ENCODE measurements at regions of chr6 and their contacts with region 1.

Region 1: GRCh38 chr6:41191569-41191968 is 9.4 kb downstream of the TREML2 start:
- DNase-seq: peak in 4 of 9 experiments; percentile 28 to 58 (median 42)
- ATAC-seq: peak; percentile 48
- H3K4me3 ChIP-seq: no peak overlapping the region
- H3K4me3 Mint-ChIP-seq: no peak overlapping the region
- H3K27ac ChIP-seq: no peak overlapping the region
- H3K27ac Mint-ChIP-seq: no peak overlapping the region
- H3K4me1 ChIP-seq: peaks cover 27% of the 10 kb centered on the region
- H3K4me1 Mint-ChIP-seq: peaks cover 45% of the 10 kb centered on the region
- H3K27me3 ChIP-seq: no peaks in the 10 kb centered on the region
- H3K27me3 Mint-ChIP-seq: no peaks in the 10 kb centered on the region
- CTCF ChIP-seq: no peak

Region 2: DNA sequence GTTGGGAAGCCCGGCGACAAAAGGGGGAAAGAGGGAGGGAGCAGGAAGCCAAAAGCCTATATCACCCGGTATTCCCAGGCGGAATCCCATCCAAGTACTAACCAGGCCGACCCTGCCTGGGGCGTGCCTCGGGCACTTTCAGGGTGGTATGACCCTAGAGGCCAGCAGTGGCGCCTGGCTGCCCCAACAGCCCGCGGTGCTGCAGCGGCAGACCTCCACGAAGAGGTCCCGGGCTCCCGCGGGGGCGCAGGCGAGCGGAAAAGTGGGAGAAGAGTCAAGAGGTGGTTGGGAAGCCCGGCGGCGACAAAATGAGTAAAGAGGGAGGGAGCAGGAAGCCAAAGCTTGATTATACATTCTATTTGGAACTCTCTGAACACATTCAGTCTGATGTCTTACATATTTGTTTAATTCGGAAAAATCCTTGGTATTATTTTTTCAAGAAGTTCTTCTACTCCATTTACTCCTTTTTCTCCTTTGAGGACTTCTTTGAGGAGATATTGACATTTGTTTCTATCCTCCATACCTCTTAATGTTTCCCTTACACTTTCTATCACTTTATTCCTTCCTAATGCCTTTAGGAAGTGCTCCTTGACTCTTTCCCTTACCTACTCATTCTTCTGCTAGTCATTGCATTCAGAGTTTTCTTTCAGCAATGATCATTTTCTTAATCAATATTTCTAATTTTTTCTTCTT is 48.0 kb after region 1 on chr6:
- CTCF ChIA-PET with region 1: no interaction called
- POLR2A ChIA-PET with region 1: no interaction called
- intact Hi-C with region 1: loop called in 1 of 2 experiments (anchors 10 kb)
- DNase-seq: no peak
- ATAC-seq: no peak
- H3K4me3 ChIP-seq: no peak overlapping the region
- H3K4me3 Mint-ChIP-seq: no peak overlapping the region
- H3K27ac ChIP-seq: no peak overlapping the region
- H3K27ac Mint-ChIP-seq: no peak overlapping the region
- H3K4me1 ChIP-seq: no peaks in the 10 kb centered on the region
- H3K4me1 Mint-ChIP-seq: no peaks in the 10 kb centered on the region
- H3K27me3 ChIP-seq: peaks cover 0 to 3% of the 10 kb centered on the region in 2 experiments
- H3K27me3 Mint-ChIP-seq: peaks cover 23% of the 10 kb centered on the region
- CTCF ChIP-seq: no peak

Region 3: DNA sequence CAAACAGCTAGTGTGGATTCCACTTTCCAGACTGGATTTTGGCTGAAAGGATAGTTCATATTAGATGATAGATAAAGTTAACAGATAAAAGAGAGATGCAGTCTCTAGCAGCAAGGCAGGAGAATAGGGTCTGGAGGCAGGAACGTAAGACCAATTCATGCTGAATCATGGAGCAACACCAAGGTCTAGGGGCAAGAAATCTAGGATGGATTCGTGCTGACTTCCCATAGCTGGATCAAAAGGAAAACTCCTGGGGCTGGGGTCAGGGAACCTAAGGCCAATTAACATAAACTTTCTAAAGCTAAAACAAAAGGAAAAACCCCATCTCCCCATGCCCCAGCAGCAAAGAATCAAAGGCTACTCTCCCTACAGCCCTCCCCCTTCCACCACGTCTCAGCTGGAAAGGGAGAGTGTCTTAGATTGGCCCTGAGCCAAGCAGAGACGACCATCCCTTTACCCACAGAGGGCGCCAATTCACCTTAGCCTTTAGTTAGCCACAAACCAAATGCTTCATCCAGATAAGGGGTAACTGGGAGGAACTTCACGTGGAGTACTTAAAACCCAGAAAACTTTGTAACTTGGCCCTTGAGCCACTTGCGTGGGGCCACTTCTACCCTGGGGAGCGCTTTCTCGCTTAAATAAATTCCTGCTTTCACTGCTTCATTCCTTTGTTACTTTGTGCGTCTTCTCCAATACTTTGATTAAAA is 87.3 kb after region 1 on chr6:
- CTCF ChIA-PET with region 1: interaction called, 11 read pairs
- POLR2A ChIA-PET with region 1: interaction called, 5 read pairs
- intact Hi-C with region 1: no loop called
- DNase-seq: peak; percentile 35 to 84 (median 63)
- ATAC-seq: peak; percentile 73
- H3K4me3 ChIP-seq: no peak overlapping the region
- H3K4me3 Mint-ChIP-seq: no peak overlapping the region
- H3K27ac ChIP-seq: no peak overlapping the region
- H3K27ac Mint-ChIP-seq: no peak overlapping the region
- H3K4me1 ChIP-seq: peaks cover 8% of the 10 kb centered on the region
- H3K4me1 Mint-ChIP-seq: peaks cover 10% of the 10 kb centered on the region
- H3K27me3 ChIP-seq: no peaks in the 10 kb centered on the region
- H3K27me3 Mint-ChIP-seq: peaks cover 7% of the 10 kb centered on the region
- CTCF ChIP-seq: peak; percentile 47